Transverse colon (tissue), 4 donors: ENCODE measurements at regions of chr1 and their contacts with region 1.

Region 1: GRCh38 chr1:234716908-234717375 is 107.0 kb upstream of the IRF2BP2 start:
- DNase-seq: no peak
- H3K4me3 ChIP-seq: peak overlapping the region in 1 of 4 donors; percentile 6
- H3K27ac ChIP-seq: peak overlapping the region; percentile 97 to 99 (median 98)
- H3K4me1 ChIP-seq: peaks cover 56 to 82% (median 62%) of the 10 kb centered on the region in 4 donors
- H3K27me3 ChIP-seq: no peaks in the 10 kb centered on the region
- CTCF ChIP-seq: no peak
- EP300 ChIP-seq: peak; percentile 32
- POLR2A ChIP-seq: peak; percentile 8

Region 2: DNA sequence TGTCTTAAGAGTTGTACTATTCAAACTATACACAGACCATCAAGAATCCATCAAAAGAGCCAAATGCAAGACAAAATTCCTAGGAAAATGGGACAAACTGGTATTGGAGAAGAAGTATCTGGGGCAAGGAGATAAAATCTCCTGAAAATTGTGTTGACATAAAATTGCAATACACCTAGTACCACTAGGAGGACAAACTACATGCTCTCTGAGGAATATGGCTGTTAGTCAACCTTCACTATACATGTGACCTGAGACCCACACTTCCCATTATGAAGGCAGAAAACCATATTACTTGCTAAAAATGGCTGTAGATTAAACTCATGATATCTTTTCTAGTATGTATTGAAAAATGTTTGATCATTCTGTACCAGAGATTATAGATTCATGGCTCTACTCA is 137.0 kb before region 1 on chr1:
- in situ Hi-C with region 1: no loop called
- intact Hi-C with region 1: no loop called
- DNase-seq: no peak
- H3K4me3 ChIP-seq: no peak overlapping the region
- H3K27ac ChIP-seq: no peak overlapping the region
- H3K4me1 ChIP-seq: peaks cover 0 to 16% (median 8%) of the 10 kb centered on the region in 4 donors
- H3K27me3 ChIP-seq: no peaks in the 10 kb centered on the region
- CTCF ChIP-seq: peak in 4 of 5 experiments; percentile 27 to 42 (median 38)
- EP300 ChIP-seq: no peak
- POLR2A ChIP-seq: no peak

Region 3: GRCh38 chr1:234638832-234639799 is 77.8 kb before region 1 on chr1:
- in situ Hi-C with region 1: no loop called
- intact Hi-C with region 1: no loop called
- DNase-seq: no peak
- H3K4me3 ChIP-seq: no peak overlapping the region
- H3K27ac ChIP-seq: peak overlapping the region in 2 of 4 donors; percentile 37 to 39
- H3K4me1 ChIP-seq: peaks cover 0 to 15% (median 5%) of the 10 kb centered on the region in 4 donors
- H3K27me3 ChIP-seq: no peaks in the 10 kb centered on the region
- CTCF ChIP-seq: no peak
- EP300 ChIP-seq: no peak
- POLR2A ChIP-seq: no peak

Region 4: DNA sequence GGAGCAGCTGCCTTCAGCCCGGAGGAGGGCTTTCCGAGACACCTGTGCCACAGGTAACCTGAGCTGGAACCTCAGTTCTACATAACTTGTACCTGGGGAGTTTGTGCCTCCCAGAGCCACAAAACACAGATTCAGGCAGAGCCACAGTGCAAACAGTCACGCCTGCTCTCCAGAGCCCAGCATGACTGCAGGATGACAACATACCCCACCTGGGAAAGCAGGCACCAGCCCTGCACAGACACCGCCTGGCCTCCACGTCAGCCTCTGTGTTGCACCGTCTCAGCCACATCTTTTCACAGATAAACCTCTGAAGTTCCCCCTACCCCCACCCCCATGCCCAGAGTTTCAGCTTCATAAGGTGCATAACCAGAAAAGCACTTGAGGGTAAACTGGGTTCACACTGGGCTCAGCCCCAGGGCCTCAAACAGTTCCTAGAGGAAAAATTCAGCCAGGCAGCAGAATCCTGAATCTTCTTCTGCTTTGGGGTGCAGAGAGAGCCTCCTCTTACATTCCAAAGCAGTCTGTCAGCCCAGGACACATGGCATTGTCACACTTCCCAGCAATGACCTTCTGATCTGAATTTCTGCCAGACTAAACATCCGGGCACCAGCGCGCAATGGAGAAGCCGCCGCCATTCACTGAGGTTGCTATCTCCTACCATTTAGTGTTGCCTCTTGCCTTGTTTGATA is 182.2 kb after region 1 on chr1:
- in situ Hi-C with region 1: no loop called
- intact Hi-C with region 1: no loop called
- DNase-seq: no peak
- H3K4me3 ChIP-seq: no peak overlapping the region
- H3K27ac ChIP-seq: peak overlapping the region; percentile 24 to 52 (median 32)
- H3K4me1 ChIP-seq: peaks cover 0 to 18% (median 14%) of the 10 kb centered on the region in 4 donors
- H3K27me3 ChIP-seq: no peaks in the 10 kb centered on the region
- CTCF ChIP-seq: no peak
- EP300 ChIP-seq: no peak
- POLR2A ChIP-seq: no peak

Region 5: DNA sequence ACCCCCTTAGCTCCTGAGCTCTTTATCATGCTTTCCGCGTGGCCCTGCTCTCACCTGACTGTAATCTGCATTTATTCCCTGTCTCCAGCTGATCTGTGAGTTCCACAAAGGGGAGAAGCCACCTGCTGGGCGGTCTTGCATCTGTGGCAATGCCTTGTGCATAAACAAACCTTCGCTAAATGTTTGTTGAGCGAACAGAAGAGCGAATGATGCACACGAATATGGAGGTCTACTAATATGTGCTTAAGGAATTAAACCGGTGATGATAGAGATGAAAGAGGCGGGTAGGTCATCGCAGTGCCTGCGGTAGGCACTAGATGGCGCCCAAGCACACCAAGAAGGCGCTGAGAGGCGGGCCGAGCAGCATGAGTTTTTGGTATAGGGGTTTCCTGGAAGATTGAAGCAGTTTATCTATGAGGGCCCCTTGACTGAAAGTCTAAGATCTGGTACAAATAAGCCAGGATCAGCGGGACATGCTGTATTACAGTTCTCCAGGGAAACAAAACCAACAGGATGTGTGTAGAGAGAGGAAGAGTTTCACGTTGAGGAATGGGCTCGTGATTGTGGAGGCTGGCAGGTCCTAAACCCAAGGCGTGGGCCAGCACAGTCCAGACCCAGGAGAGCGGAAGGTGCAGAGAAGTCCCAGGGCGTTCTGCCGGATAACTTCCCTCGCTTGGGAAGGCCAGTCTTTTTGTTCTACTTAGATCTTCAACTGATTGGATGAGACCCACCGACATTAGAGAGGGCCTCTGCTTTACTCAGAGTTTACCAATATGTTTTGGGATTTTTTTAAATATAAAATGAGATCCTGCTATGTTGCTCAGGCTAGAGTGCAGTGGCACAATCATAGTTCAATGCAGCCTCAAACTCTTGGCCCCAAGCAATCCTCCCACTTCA is 377.0 kb after region 1 on chr1:
- in situ Hi-C with region 1: loop called in 3 of 4 experiments (anchors 10 kb)
- intact Hi-C with region 1: loop called (anchors 5 kb)
- DNase-seq: peak; percentile 87
- H3K4me3 ChIP-seq: no peak overlapping the region
- H3K27ac ChIP-seq: peak overlapping the region in 1 of 4 donors; percentile 21
- H3K4me1 ChIP-seq: peaks cover 9 to 13% (median 11%) of the 10 kb centered on the region in 4 donors
- H3K27me3 ChIP-seq: no peaks in the 10 kb centered on the region
- CTCF ChIP-seq: peak; percentile 88 to 95 (median 93)
- EP300 ChIP-seq: no peak
- POLR2A ChIP-seq: no peak